CD8-positive, alpha-beta T cell (primary cell): ENCODE measurements at regions of chr9 and their contacts with region 1.

Region 1: DNA sequence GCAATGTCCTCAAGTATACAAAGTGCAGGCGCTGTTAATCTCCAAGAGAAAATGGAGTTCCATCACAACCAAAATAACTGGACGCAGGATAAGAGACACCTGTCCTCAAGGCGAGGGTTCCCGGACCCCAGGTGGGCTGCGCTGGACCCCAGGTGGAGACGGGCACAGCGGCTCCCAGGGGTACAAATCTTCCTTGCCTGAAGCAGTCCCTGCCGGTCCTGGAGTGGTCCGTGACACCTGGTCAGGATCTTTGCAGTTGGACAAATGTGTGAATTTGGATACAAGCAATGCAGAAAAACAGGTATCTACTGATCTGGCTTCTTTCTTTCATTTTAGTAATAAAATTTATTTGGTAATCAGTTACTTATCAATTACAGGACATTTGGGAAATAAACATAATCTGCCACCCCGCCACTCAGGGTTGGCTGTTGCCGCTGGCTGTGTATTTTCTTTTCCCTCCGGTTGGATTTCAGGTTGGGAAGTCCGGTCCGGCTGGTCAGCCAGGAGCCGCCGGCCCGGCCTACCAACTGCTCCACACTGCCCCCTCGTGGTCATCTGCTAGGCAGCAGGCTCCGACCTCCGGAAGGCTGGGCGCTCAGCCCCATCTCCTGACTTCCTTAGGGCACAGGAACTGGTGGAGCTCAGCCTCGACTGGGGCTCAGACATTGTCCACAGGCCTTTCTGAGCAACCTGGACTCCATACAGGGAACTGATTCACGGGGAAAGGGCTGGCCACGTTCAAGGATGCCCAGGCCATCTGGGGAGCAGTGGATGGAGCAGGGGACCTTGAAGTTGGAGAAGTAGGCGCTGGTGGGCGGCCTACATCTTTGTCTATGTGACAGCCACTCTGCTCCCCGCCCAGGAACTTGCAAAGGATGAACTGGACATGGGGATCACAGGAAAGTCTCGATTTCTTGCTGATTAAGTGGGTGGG is 43.4 kb downstream of the NXNL2 start:
- DNase-seq: peak; percentile 31 to 81 (median 64)
- ATAC-seq: no peak
- H3K4me3 ChIP-seq: no peak overlapping the region
- H3K4me3 Mint-ChIP-seq: no peak overlapping the region
- H3K27ac ChIP-seq: no peak overlapping the region
- H3K27ac Mint-ChIP-seq: no peak overlapping the region
- H3K4me1 ChIP-seq: no peaks in the 10 kb centered on the region
- H3K4me1 Mint-ChIP-seq: peaks cover 3% of the 10 kb centered on the region
- H3K27me3 ChIP-seq: no peaks in the 10 kb centered on the region
- H3K27me3 Mint-ChIP-seq: peaks cover 23% of the 10 kb centered on the region
- CTCF ChIP-seq: peak; percentile 89

Region 2: GRCh38 chr9:87336914-87337333 is 1241.5 kb before region 1 on chr9:
- CTCF ChIA-PET with region 1: no interaction called
- POLR2A ChIA-PET with region 1: no interaction called
- intact Hi-C with region 1: loop called in 1 of 2 experiments (anchors 5 kb)
- DNase-seq: peak in 2 of 9 experiments; percentile 37 to 54
- ATAC-seq: no peak
- H3K4me3 ChIP-seq: peak overlapping the region in 1 of 2 experiments; percentile 49
- H3K4me3 Mint-ChIP-seq: peak overlapping the region; percentile 70
- H3K27ac ChIP-seq: no peak overlapping the region
- H3K27ac Mint-ChIP-seq: no peak overlapping the region
- H3K4me1 ChIP-seq: no peaks in the 10 kb centered on the region
- H3K4me1 Mint-ChIP-seq: peaks cover 13% of the 10 kb centered on the region
- H3K27me3 ChIP-seq: peaks cover 3 to 11% of the 10 kb centered on the region in 2 experiments
- H3K27me3 Mint-ChIP-seq: peaks cover 39% of the 10 kb centered on the region
- CTCF ChIP-seq: peak; percentile 55

Region 3: GRCh38 chr9:87678650-87679515 is 899.5 kb before region 1 on chr9:
- CTCF ChIA-PET with region 1: no interaction called
- POLR2A ChIA-PET with region 1: no interaction called
- intact Hi-C with region 1: loop called (anchors 5 kb)
- DNase-seq: peak in 5 of 9 experiments; percentile 18 to 48 (median 29)
- ATAC-seq: no peak
- H3K4me3 ChIP-seq: no peak overlapping the region
- H3K4me3 Mint-ChIP-seq: no peak overlapping the region
- H3K27ac ChIP-seq: no peak overlapping the region
- H3K27ac Mint-ChIP-seq: no peak overlapping the region
- H3K4me1 ChIP-seq: no peaks in the 10 kb centered on the region
- H3K4me1 Mint-ChIP-seq: no peaks in the 10 kb centered on the region
- H3K27me3 ChIP-seq: no peaks in the 10 kb centered on the region
- H3K27me3 Mint-ChIP-seq: no peaks in the 10 kb centered on the region
- CTCF ChIP-seq: peak; percentile 36

Region 4: GRCh38 chr9:87950765-87951488 is 627.5 kb before region 1 on chr9:
- CTCF ChIA-PET with region 1: interaction called, 7 read pairs
- POLR2A ChIA-PET with region 1: no interaction called
- intact Hi-C with region 1: loop called in 1 of 2 experiments (anchors 1 kb)
- DNase-seq: peak in 1 of 9 experiments; percentile 26
- ATAC-seq: no peak
- H3K4me3 ChIP-seq: no peak overlapping the region
- H3K4me3 Mint-ChIP-seq: no peak overlapping the region
- H3K27ac ChIP-seq: no peak overlapping the region
- H3K27ac Mint-ChIP-seq: no peak overlapping the region
- H3K4me1 ChIP-seq: no peaks in the 10 kb centered on the region
- H3K4me1 Mint-ChIP-seq: no peaks in the 10 kb centered on the region
- H3K27me3 ChIP-seq: no peaks in the 10 kb centered on the region
- H3K27me3 Mint-ChIP-seq: peaks cover 40% of the 10 kb centered on the region
- CTCF ChIP-seq: peak; percentile 30

Region 5: DNA sequence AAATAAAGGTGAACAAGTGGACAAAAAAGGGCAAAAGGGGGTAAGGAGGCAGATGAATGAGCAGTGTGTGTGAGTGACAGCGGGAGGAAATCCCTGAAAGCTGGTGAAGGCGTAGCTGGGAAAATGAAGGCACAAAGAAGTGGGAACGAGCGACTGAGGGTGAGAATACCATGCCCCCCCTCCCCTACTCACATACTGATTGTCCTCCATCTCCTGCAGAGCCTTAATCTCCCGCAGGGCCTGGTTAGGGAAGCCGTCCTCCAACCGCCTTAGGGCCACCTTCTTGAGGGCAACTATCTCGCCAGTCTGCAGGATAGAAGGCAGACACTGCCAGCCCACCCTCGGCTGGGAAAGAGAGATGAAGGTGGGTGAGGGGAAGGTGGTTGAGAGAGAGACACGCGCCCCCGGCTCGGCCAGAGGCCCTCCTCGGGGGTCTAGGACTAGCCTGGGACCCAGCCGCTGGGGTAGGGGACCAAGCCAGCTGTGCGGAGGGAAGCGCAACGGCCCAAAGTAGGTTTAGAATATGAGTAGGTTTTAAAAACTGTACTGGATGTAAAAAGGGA is 604.6 kb before region 1 on chr9:
- CTCF ChIA-PET with region 1: no interaction called
- POLR2A ChIA-PET with region 1: no interaction called
- intact Hi-C with region 1: loop called in 1 of 2 experiments (anchors 1 kb)
- DNase-seq: no peak
- ATAC-seq: no peak
- H3K4me3 ChIP-seq: peak overlapping the region; percentile 81 to 83
- H3K4me3 Mint-ChIP-seq: peak overlapping the region; percentile 97
- H3K27ac ChIP-seq: peak overlapping the region; percentile 86 to 92
- H3K27ac Mint-ChIP-seq: peak overlapping the region; percentile 99
- H3K4me1 ChIP-seq: peaks cover 10% of the 10 kb centered on the region
- H3K4me1 Mint-ChIP-seq: peaks cover 30% of the 10 kb centered on the region
- H3K27me3 ChIP-seq: no peaks in the 10 kb centered on the region
- H3K27me3 Mint-ChIP-seq: no peaks in the 10 kb centered on the region
- CTCF ChIP-seq: no peak

Region 6: DNA sequence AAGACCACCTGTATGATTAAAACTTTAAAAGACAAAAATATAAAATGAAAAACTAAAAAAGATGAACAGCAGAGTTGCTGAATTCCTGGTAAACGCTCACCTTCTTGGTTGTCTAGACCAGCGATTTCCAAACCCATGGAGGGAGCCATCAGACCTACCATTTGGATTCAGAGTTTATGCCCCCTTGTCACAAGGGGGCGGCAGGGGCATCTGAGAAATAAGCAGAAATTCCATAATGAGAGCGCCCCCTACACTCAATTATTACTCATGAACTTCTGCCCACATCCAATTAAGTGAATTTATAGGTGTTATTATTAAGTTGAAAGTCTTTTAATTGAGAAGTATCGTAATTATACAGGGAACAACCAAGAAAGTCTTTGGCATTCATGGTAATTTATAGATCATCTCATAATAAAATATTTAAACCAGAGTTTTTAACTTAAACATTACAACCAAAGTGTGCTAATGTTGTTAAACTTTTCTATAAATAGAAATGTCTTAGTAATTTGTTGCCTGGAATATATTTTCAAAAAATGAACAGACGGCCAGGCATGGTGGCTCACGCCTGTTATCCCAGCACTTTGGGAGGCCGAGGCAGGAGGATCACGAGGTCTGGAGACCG is 404.9 kb before region 1 on chr9:
- CTCF ChIA-PET with region 1: interaction called, 4 read pairs
- POLR2A ChIA-PET with region 1: no interaction called
- intact Hi-C with region 1: loop called in 1 of 2 experiments (anchors 1 kb)
- DNase-seq: peak; percentile 16 to 80 (median 60)
- ATAC-seq: peak; percentile 58
- H3K4me3 ChIP-seq: no peak overlapping the region
- H3K4me3 Mint-ChIP-seq: no peak overlapping the region
- H3K27ac ChIP-seq: no peak overlapping the region
- H3K27ac Mint-ChIP-seq: no peak overlapping the region
- H3K4me1 ChIP-seq: no peaks in the 10 kb centered on the region
- H3K4me1 Mint-ChIP-seq: peaks cover 1% of the 10 kb centered on the region
- H3K27me3 ChIP-seq: no peaks in the 10 kb centered on the region
- H3K27me3 Mint-ChIP-seq: peaks cover 2% of the 10 kb centered on the region
- CTCF ChIP-seq: peak; percentile 80

Region 7: GRCh38 chr9:88826771-88827181 is 248.4 kb after region 1 on chr9:
- CTCF ChIA-PET with region 1: no interaction called
- POLR2A ChIA-PET with region 1: no interaction called
- intact Hi-C with region 1: no loop called
- DNase-seq: no peak
- ATAC-seq: no peak
- H3K4me3 ChIP-seq: no peak overlapping the region
- H3K4me3 Mint-ChIP-seq: no peak overlapping the region
- H3K27ac ChIP-seq: no peak overlapping the region
- H3K27ac Mint-ChIP-seq: no peak overlapping the region
- H3K4me1 ChIP-seq: no peaks in the 10 kb centered on the region
- H3K4me1 Mint-ChIP-seq: no peaks in the 10 kb centered on the region
- H3K27me3 ChIP-seq: peaks cover 3 to 9% of the 10 kb centered on the region in 2 experiments
- H3K27me3 Mint-ChIP-seq: peaks cover 52% of the 10 kb centered on the region
- CTCF ChIP-seq: no peak